ENCODE measurements at regions of chr15 and their contacts with region 1.

Region 1: GRCh38 chr15:44711356-44712107 is at the start of gene B2M:
- DNase-seq: peak; percentile 94 to 96 (median 96)
- ATAC-seq: peak; percentile 93
- H3K4me3 ChIP-seq: peak within 1 kb of the TSS; percentile 74
- H3K27ac ChIP-seq: peak within 1 kb of the TSS; percentile 90
- H3K4me1 ChIP-seq: peaks cover 5 to 14% of the 10 kb centered on the region in 2 experiments; a peak in 4 of 5 replicates
- H3K27me3 ChIP-seq: no peaks in the 10 kb centered on the region
- CTCF ChIP-seq: no peak
- EP300 ChIP-seq: no peak
- POLR2A ChIP-seq: peak; percentile 99
- RAD21 ChIP-seq: no peak
- polyA plus RNA-seq, gene B2M: 2,823 to 3,138 TPM

Region 2: GRCh38 chr15:44327578-44327977 is 384.0 kb before region 1 on chr15:
- CTCF ChIA-PET with region 1: no interaction called
- POLR2A ChIA-PET with region 1: no interaction called
- in situ Hi-C with region 1: no loop called
- intact Hi-C with region 1: no loop called
- DNase-seq: no peak
- ATAC-seq: no peak
- H3K4me3 ChIP-seq: no peak overlapping the region
- H3K27ac ChIP-seq: no peak overlapping the region
- H3K4me1 ChIP-seq: no peaks in the 10 kb centered on the region
- H3K27me3 ChIP-seq: no peaks in the 10 kb centered on the region
- CTCF ChIP-seq: no peak
- EP300 ChIP-seq: no peak
- POLR2A ChIP-seq: no peak
- RAD21 ChIP-seq: no peak

Region 3: GRCh38 chr15:44501768-44502366 is 209.7 kb before region 1 on chr15:
- CTCF ChIA-PET with region 1: no interaction called
- POLR2A ChIA-PET with region 1: no interaction called
- in situ Hi-C with region 1: no loop called
- intact Hi-C with region 1: no loop called
- DNase-seq: peak; percentile 30 to 43 (median 37)
- ATAC-seq: peak; percentile 84
- H3K4me3 ChIP-seq: no peak overlapping the region
- H3K27ac ChIP-seq: no peak overlapping the region
- H3K4me1 ChIP-seq: no peaks in the 10 kb centered on the region
- H3K27me3 ChIP-seq: no peaks in the 10 kb centered on the region
- CTCF ChIP-seq: peak; percentile 41 to 66 (median 44); a peak in 4 of 6 replicates
- EP300 ChIP-seq: no peak
- POLR2A ChIP-seq: no peak
- RAD21 ChIP-seq: peak; percentile 51 to 65

Region 4: DNA sequence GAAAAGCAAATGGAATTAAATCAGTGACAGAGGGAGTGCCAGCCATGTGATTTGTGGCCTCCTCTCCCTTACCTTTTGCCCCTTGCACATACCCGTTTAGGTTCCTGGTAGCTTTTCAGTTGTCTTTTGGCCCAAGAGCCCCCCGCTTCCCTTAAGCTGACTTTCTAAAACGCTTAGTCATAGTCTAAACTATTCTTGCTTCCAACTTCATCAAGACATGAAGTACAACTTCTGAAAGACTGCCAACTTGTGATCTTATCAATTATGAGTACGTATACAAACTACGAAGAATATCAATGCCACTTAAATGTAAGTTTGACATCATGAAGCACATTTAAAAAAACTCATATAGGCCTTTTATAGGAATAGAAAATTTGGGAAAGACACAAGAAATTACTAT is 112.6 kb before region 1 on chr15:
- CTCF ChIA-PET with region 1: no interaction called
- POLR2A ChIA-PET with region 1: no interaction called
- in situ Hi-C with region 1: no loop called
- intact Hi-C with region 1: no loop called
- DNase-seq: peak in 2 of 4 experiments; percentile 19 to 52
- ATAC-seq: peak; percentile 64
- H3K4me3 ChIP-seq: no peak overlapping the region
- H3K27ac ChIP-seq: peak overlapping the region; percentile 46; the same call in 2 of the 3 replicates
- H3K4me1 ChIP-seq: peaks cover 0 to 13% of the 10 kb centered on the region in 2 experiments; a peak in 3 of 5 replicates
- H3K27me3 ChIP-seq: no peaks in the 10 kb centered on the region
- CTCF ChIP-seq: no peak
- EP300 ChIP-seq: no peak
- POLR2A ChIP-seq: no peak
- RAD21 ChIP-seq: no peak

Region 5: GRCh38 chr15:44663409-44664308 is 47.9 kb before region 1 on chr15 and contains the start of gene SPG11:
- CTCF ChIA-PET with region 1: interaction called, 9 read pairs
- POLR2A ChIA-PET with region 1: interaction called, 26 read pairs
- in situ Hi-C with region 1: no loop called
- intact Hi-C with region 1: loop called (anchors 1 kb)
- DNase-seq: peak; percentile 94 to 99 (median 96)
- ATAC-seq: peak; percentile 95
- H3K4me3 ChIP-seq: peak within 1 kb of the TSS; percentile 93
- H3K27ac ChIP-seq: peak within 1 kb of the TSS; percentile 95
- H3K4me1 ChIP-seq: peaks cover 10 to 18% of the 10 kb centered on the region in 2 experiments
- H3K27me3 ChIP-seq: no peaks in the 10 kb centered on the region
- CTCF ChIP-seq: peak; percentile 91 to 98 (median 93)
- EP300 ChIP-seq: no peak
- POLR2A ChIP-seq: peak; percentile 97
- RAD21 ChIP-seq: peak; percentile 97 to 98
- polyA plus RNA-seq, gene SPG11: 23.3 to 24.0 TPM

Region 6: DNA sequence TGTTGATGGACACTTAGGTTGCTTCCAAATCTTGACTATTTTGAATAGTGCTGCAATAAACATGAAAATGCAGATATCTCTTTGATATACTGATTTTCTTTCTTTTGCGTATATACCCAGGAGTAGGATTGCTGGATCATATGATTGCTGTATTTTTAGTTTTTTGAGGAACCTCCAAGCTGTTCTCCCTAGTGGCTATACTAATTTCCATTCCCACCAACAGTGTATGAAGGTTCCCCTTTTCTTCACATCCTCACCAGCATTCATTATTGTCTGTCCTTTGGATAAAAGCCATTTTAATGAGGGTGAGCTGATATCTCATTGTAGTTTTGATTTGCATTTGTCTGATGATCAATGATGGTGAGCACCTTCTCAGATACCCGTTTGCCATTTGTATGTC is 12.9 kb before region 1 on chr15:
- CTCF ChIA-PET with region 1: no interaction called
- POLR2A ChIA-PET with region 1: interaction called, 13 read pairs
- in situ Hi-C with region 1: no loop called
- intact Hi-C with region 1: no loop called
- DNase-seq: no peak
- ATAC-seq: no peak
- H3K4me3 ChIP-seq: no peak overlapping the region
- H3K27ac ChIP-seq: no peak overlapping the region
- H3K4me1 ChIP-seq: no peaks in the 10 kb centered on the region
- H3K27me3 ChIP-seq: no peaks in the 10 kb centered on the region
- CTCF ChIP-seq: no peak
- EP300 ChIP-seq: no peak
- POLR2A ChIP-seq: no peak
- RAD21 ChIP-seq: no peak

Region 7: DNA sequence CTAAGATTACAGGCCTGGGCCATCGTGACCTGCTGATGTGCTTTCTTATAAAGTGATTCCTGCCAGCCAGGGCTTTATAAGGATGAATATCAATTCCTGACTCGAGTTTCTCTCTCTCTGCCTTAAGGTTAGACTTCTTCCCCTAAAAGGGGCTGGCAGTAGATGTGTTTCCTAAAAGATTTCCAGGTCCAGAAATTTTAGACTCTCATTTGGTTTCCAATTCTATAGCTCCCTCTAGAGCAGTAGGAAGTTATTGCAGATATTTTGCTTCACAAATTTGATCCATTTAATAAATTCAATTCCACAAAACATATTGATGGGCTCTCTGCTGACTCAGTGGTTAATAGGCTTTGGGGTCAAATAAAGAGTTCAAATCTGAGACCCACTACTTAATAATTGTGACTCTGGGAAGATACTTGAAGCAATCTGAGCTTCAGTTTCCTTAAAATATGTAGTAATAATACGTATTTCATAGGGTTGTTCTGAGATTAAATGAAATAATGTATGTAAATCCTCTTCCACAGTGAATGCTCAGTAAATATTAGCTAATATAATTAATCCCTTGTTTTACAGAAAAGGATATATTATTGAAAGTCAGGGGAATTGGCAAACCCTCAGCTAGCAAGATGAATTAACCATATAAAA is 26.9 kb after region 1 on chr15:
- CTCF ChIA-PET with region 1: interaction called, 9 read pairs
- POLR2A ChIA-PET with region 1: interaction called, 19 read pairs
- in situ Hi-C with region 1: no loop called
- intact Hi-C with region 1: loop called (anchors 1 kb)
- DNase-seq: peak; percentile 21 to 58 (median 36)
- ATAC-seq: no peak
- H3K4me3 ChIP-seq: no peak overlapping the region
- H3K27ac ChIP-seq: no peak overlapping the region
- H3K4me1 ChIP-seq: peaks cover 6 to 18% of the 10 kb centered on the region in 2 experiments; a peak in 4 of 5 replicates
- H3K27me3 ChIP-seq: no peaks in the 10 kb centered on the region
- CTCF ChIP-seq: peak; percentile 62 to 89 (median 65); a peak in 5 of 6 replicates
- EP300 ChIP-seq: no peak
- POLR2A ChIP-seq: no peak
- RAD21 ChIP-seq: peak; percentile 90 to 96

Region 8: DNA sequence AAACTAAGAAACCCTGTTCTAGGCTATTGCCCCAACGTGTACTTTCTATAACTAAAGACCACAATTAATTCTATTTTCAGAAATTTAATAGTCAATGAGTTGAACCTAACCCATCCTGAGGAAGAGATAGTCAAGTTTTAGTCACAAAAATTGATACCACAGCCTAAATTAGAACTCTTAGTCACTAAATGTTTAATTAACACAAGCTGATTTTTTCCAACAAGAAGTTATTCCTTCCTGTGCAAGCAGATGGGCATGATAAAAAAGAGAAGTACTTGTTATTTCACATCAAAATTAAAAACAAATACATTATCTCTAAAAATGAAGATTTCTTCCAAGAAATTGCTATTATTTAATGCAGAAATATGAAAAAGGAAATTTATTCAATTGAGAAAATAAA is 206.6 kb after region 1 on chr15:
- CTCF ChIA-PET with region 1: no interaction called
- POLR2A ChIA-PET with region 1: no interaction called
- in situ Hi-C with region 1: no loop called
- intact Hi-C with region 1: loop called (anchors 10 kb)
- DNase-seq: no peak
- ATAC-seq: no peak
- H3K4me3 ChIP-seq: no peak overlapping the region
- H3K27ac ChIP-seq: no peak overlapping the region
- H3K4me1 ChIP-seq: no peaks in the 10 kb centered on the region; a peak in 1 of 5 replicates
- H3K27me3 ChIP-seq: no peaks in the 10 kb centered on the region
- CTCF ChIP-seq: no peak
- EP300 ChIP-seq: no peak
- POLR2A ChIP-seq: no peak
- RAD21 ChIP-seq: no peak